PC-9 (cell line): ENCODE measurements at regions of chr7 and their contacts with region 1.

Region 1: DNA sequence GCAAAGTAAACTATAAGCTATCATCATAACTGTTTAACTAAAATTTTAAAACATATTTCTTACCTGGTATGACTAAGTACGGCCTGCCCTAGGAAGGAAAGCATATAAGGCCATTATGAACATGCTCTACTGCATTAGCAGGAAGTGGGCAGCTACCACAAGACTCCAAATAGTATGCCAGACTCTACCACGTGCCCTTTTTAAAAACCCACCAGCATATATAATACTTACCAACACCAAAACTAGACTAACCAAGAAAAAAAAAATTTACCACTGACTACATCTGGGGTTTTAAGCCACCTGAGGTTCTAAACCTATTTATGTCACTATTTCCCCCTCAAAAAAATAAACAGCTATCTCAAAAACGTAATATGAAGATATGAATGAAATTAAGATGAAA is 30.1 kb downstream of the NUDCD3 start:
- DNase-seq: no peak
- H3K4me3 ChIP-seq: no peak overlapping the region
- H3K27ac ChIP-seq: no peak overlapping the region
- H3K4me1 ChIP-seq: no peaks in the 10 kb centered on the region
- H3K27me3 ChIP-seq: no peaks in the 10 kb centered on the region
- CTCF ChIP-seq: no peak

Region 2: DNA sequence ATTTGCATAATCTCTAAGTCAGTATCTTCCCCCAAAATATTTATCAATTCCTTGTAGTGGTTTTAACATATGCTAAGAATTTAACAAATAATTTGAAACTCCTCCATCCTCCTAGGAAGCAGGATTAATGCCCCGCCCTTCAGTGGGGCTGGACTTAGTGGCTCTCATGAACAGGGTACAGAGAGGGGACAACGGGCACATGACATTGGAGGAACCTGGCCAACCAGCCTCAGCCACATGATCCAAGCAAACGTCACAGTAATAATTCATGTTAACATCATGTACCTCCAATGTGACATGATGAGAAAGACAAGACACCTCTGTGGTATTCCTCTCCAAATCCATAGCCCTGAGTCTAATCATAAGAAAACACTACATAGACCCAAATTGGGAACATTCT is 20.4 kb before region 1 on chr7:
- CTCF ChIA-PET with region 1: no interaction called
- POLR2A ChIA-PET with region 1: no interaction called
- intact Hi-C with region 1: loop called (anchors 2 kb)
- DNase-seq: no peak
- H3K4me3 ChIP-seq: no peak overlapping the region
- H3K27ac ChIP-seq: no peak overlapping the region
- H3K4me1 ChIP-seq: no peaks in the 10 kb centered on the region
- H3K27me3 ChIP-seq: no peaks in the 10 kb centered on the region
- CTCF ChIP-seq: no peak

Region 3: DNA sequence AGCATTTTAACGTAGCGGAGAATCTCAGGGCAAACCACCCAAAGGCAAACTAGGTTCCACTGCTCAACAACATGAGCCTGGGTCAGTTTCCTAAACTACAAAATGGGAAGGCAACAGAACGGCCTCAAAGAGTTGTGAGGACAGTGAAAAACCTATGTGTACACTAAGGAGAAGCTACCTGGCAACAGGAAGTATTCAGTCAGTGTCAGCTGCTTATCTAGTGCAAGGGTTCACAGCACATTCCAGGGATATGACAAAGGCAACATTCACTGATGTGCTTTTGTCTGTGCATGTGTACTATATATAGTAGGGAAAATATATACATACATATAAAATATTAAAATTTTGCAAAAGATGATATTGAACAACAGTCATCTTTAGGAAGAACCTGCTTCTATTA is 13.0 kb after region 1 on chr7:
- CTCF ChIA-PET with region 1: no interaction called
- POLR2A ChIA-PET with region 1: no interaction called
- intact Hi-C with region 1: no loop called
- DNase-seq: peak; percentile 20 to 88
- H3K4me3 ChIP-seq: no peak overlapping the region
- H3K27ac ChIP-seq: peak overlapping the region; percentile 65
- H3K4me1 ChIP-seq: peaks cover 29% of the 10 kb centered on the region
- H3K27me3 ChIP-seq: no peaks in the 10 kb centered on the region
- CTCF ChIP-seq: no peak

Region 4: DNA sequence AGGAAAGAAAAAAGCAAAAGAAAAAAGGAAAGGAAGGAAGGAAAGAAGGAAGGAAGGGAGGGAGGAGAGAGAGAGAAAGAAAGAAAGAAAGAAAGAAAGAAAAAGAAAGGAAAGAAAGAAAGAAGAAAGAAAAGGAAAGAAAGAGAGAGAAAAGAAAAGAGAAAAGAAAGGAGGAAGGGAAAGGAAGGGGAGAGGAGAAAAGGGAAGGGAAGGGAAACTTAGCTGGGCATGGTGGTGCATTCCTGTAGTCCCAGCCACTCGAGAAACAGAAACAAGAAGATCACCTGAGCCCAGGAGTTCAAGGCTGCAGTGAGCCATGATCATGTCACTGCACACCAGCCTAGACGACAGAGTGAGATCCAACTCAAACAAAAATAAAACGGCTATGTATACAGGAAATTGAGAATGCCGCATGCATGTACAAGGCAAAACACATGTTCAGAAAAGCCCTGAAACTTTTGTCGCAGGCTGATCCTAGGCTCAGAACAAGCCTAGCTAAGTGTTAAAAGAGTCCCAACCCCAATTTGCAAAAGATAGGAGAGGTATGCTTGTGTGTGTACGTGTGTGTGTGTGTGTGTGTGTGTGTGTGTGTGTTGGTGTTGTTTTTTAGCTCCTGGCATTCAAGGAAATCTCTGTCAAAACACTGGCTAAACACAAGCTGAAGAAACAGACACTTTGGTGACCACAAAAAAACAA is 87.4 kb after region 1 on chr7:
- CTCF ChIA-PET with region 1: no interaction called
- POLR2A ChIA-PET with region 1: interaction called, 22 read pairs
- intact Hi-C with region 1: no loop called
- DNase-seq: peak in 1 of 2 experiments; percentile 25
- H3K4me3 ChIP-seq: no peak overlapping the region
- H3K27ac ChIP-seq: no peak overlapping the region
- H3K4me1 ChIP-seq: peaks cover 52% of the 10 kb centered on the region
- H3K27me3 ChIP-seq: no peaks in the 10 kb centered on the region
- CTCF ChIP-seq: no peak